Kidney (tissue), 22 donors: ENCODE measurements at regions of chr16 and their contacts with region 1.

Region 1: GRCh38 chr16:24943473-24943872 is 71.7 kb downstream of the ARHGAP17 start:
- DNase-seq: no peak
- H3K4me3 ChIP-seq: no peak overlapping the region
- H3K27ac ChIP-seq: no peak overlapping the region
- H3K4me1 ChIP-seq: no peaks in the 10 kb centered on the region
- H3K27me3 ChIP-seq: no peaks in the 10 kb centered on the region
- CTCF ChIP-seq: no peak

Region 2: GRCh38 chr16:24883714-24884151 is 59.7 kb before region 1 on chr16:
- intact Hi-C with region 1: loop called (anchors 10 kb)
- DNase-seq: no peak
- H3K4me3 ChIP-seq: no peak overlapping the region
- H3K27ac ChIP-seq: no peak overlapping the region
- H3K4me1 ChIP-seq: no peaks in the 10 kb centered on the region
- H3K27me3 ChIP-seq: no peaks in the 10 kb centered on the region
- CTCF ChIP-seq: no peak

Region 3: DNA sequence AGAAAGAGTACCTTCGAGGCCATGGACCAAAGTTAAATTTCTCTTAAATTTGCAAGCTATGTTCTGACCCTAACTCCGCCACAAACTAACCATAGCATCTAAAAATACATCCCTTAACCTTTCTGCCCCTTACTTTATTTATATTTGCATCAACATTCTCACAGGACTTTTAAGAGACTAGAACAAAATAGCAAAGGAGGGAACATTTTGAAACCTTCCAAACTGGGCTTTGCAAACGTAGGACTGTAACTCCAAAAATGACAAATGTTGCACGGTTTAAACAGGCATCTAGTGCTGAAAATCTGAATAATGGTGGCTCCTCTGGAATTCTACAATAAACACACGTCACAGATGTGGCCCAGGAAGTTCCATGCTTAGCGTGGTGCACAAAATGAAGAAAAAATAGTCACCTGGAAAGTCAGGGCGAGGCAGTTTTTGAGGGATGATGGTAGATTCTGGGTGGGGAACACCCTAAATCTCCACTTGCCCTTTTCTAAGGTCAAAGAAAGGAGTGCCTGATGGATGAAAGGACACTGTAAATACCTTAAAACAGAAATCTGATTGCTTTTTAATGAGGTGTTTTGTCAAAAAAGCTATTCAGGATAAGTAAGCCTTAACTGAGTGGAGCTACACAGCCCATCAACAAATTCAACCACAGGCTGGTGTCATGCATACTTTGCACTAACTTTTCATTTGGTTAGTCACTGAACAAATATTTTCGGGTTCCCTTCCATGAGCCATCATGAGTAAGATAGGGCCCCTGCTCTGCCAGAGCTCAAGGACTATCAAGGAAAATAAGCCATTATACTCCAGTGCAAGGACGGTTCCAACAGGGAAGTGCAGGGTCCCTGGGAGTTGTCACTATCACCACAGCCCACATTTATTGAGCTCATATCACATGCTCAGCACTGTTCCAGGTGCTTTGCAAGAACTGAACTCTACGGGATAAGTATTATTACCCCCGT is 50.5 kb after region 1 on chr16:
- intact Hi-C with region 1: no loop called
- DNase-seq: no peak
- H3K4me3 ChIP-seq: no peak overlapping the region
- H3K27ac ChIP-seq: no peak overlapping the region
- H3K4me1 ChIP-seq: peaks cover 2 to 9% (median 6%) of the 10 kb centered on the region in 3 donors
- H3K27me3 ChIP-seq: no peaks in the 10 kb centered on the region
- CTCF ChIP-seq: no peak

Region 4: GRCh38 chr16:25006469-25007055 is 63.1 kb after region 1 on chr16:
- intact Hi-C with region 1: no loop called
- DNase-seq: no peak
- H3K4me3 ChIP-seq: no peak overlapping the region
- H3K27ac ChIP-seq: peak overlapping the region in 1 of 2 donors; percentile 64
- H3K4me1 ChIP-seq: peaks cover 0 to 7% (median 4%) of the 10 kb centered on the region in 3 donors
- H3K27me3 ChIP-seq: no peaks in the 10 kb centered on the region
- CTCF ChIP-seq: no peak

Region 5: DNA sequence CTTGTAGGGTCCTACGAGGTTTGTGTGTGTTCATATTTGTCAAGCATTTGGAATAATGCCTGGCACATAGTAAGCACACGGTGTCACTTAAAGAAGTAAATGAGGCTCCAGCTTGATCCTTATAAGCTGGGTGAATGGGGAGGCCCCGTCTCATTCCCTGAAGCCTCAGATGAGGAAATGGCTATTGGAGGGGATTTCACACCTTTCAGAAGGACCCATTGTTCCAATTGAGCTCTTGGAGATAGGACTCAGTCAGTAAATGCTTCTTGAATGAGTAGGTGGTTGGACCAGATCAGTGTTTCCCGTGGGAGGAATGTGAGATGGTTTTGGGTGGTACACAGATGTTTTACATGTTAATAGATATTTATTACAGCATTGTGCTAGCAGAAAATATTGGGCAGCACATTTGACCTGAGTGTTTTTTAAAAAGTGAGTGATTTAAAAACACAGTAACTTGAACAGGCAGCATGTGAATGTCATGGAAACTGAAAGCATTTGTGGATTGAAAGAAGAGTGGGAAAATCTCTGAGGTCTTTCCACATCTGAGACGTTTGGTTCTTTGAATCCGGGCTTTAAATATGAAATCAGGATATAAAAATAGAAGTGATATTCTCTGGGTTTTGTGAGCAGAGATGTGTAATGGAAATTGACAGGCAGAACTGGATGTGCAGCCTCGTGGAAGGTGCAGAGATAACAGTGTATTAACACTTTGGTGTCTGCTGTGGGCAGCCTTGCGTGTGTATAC is 108.1 kb after region 1 on chr16:
- intact Hi-C with region 1: no loop called
- DNase-seq: no peak
- H3K4me3 ChIP-seq: no peak overlapping the region
- H3K27ac ChIP-seq: peak overlapping the region in 1 of 2 donors; percentile 7
- H3K4me1 ChIP-seq: peaks cover 0 to 8% (median 0%) of the 10 kb centered on the region in 3 donors
- H3K27me3 ChIP-seq: no peaks in the 10 kb centered on the region
- CTCF ChIP-seq: no peak